B cell (primary cell): ENCODE measurements at regions of chr5 and their contacts with region 1.

Region 1: DNA sequence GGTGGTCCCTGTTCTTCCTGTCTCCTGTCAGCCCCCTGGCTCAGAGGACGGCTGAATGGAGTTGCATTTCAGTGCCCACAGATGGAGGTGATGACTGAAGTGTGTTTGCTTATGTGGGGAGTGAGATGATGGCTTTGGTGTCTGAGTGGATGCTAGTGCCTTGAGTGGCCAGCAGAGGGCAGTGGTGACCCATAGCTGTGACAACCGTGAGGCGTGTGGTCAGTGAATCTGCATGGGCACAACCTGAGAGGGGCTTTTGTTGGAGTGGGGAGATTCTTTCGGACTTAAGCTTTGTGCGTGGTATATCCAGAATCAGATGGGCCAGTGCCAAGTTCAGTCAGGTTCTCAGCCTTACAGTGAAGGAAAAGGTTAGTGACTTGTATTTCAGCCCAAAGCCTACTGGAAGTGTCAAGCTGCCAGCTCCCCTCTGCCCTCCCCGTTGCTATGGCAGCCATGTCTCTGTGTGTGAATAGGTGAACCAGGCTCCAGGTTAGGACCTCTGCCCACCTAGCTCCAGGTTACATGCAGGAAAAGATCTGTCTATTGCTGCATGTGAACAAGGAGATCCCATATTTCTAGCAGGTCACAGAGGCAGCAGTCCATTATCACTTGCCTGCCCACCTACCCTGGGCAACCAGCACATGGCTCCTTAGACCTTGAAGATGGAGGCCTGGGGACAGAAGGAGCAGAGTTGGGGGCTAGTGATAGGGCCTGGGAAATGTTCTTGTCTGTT is 14.7 kb upstream of the CXXC5 start:
- DNase-seq: peak; percentile 87
- ATAC-seq: peak; percentile 14
- H3K4me3 ChIP-seq: no peak overlapping the region
- H3K4me3 Mint-ChIP-seq: peak overlapping the region; percentile 17
- H3K27ac ChIP-seq: peak overlapping the region; percentile 88 to 93
- H3K27ac Mint-ChIP-seq: peak overlapping the region; percentile 61
- H3K4me1 ChIP-seq: peaks cover 44 to 59% of the 10 kb centered on the region in 2 donors
- H3K4me1 Mint-ChIP-seq: peaks cover 54% of the 10 kb centered on the region
- H3K27me3 ChIP-seq: no peaks in the 10 kb centered on the region
- H3K27me3 Mint-ChIP-seq: no peaks in the 10 kb centered on the region
- CTCF ChIP-seq: peak; percentile 96

Region 2: GRCh38 chr5:139403787-139404483 is 229.5 kb before region 1 on chr5 and contains the start of gene SPATA24:
- CTCF ChIA-PET with region 1: no interaction called
- POLR2A ChIA-PET with region 1: interaction called, 3 read pairs
- intact Hi-C with region 1: loop called (anchors 10 kb)
- DNase-seq: peak; percentile 99
- ATAC-seq: peak; percentile 85
- H3K4me3 ChIP-seq: peak within 1 kb of the TSS; percentile 50 to 73 (median 68)
- H3K4me3 Mint-ChIP-seq: peak within 1 kb of the TSS; percentile 95
- H3K27ac ChIP-seq: peak within 1 kb of the TSS; percentile 85 to 86
- H3K27ac Mint-ChIP-seq: peak within 1 kb of the TSS; percentile 97
- H3K4me1 ChIP-seq: peaks cover 33 to 43% of the 10 kb centered on the region in 2 donors
- H3K4me1 Mint-ChIP-seq: peaks cover 43% of the 10 kb centered on the region
- H3K27me3 ChIP-seq: no peaks in the 10 kb centered on the region
- H3K27me3 Mint-ChIP-seq: no peaks in the 10 kb centered on the region
- CTCF ChIP-seq: no peak
- total RNA-seq, gene SPATA24: 6.4 and 8.2 TPM in 2 replicates

Region 3: DNA sequence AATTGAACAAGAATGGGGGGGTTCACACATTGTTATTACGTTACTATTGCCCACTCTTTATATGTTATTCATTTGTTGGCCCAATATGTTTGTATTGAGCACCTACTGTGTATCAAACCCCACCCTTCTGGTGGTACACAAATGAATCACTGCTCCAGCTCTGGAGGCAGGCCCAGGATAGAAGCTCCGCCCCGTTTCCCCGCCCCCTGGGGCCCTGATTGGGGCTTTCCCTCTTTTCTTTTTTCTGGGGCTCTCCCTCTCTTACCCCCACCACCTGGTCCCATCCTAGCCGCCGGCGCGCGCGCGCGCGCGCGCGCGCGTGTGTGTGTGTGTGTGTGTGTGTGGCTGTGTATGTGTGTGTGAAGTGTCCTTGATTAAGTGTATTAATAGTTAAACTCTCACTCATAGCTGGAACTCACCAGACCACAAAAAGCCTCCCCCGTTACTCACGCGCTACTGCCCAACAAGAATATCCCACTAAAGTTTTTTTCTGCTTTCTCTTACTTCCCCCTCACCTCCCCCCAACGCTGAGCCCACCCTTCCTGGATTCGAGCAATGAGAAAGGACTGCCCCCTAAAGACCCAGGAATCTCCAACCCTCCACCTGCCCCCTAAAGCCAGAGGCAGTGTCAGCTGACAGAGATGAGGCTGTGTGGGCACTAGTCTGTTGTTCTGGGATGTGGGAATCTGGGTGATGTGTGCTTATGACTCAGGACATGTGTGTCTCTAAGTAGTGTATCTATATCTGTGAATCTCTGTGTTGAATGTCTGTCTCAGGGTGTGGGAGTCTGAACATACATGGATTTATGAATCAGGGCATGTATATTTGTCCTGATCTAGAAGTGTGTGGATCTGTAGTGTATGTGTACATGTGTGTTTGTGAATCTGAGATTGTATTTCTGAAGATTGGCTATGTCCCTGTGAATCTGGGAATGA is 18.7 kb after region 1 on chr5:
- CTCF ChIA-PET with region 1: interaction called, 338 read pairs
- POLR2A ChIA-PET with region 1: interaction called, 511 read pairs
- intact Hi-C with region 1: loop called (anchors 1 kb)
- DNase-seq: peak; percentile 92
- ATAC-seq: peak; percentile 50
- H3K4me3 ChIP-seq: peak overlapping the region; percentile 50 to 98 (median 95)
- H3K4me3 Mint-ChIP-seq: peak overlapping the region; percentile 88
- H3K27ac ChIP-seq: peak overlapping the region; percentile 71 to 90
- H3K27ac Mint-ChIP-seq: peak overlapping the region; percentile 94
- H3K4me1 ChIP-seq: peaks cover 68 to 74% of the 10 kb centered on the region in 2 donors
- H3K4me1 Mint-ChIP-seq: peaks cover 71% of the 10 kb centered on the region
- H3K27me3 ChIP-seq: no peaks in the 10 kb centered on the region
- H3K27me3 Mint-ChIP-seq: no peaks in the 10 kb centered on the region
- CTCF ChIP-seq: no peak

Region 4: GRCh38 chr5:139696894-139697658 is 63.6 kb after region 1 on chr5:
- CTCF ChIA-PET with region 1: interaction called, 502 read pairs
- POLR2A ChIA-PET with region 1: interaction called, 7 read pairs
- intact Hi-C with region 1: no loop called
- DNase-seq: peak; percentile 55
- ATAC-seq: peak; percentile 34
- H3K4me3 ChIP-seq: peak overlapping the region in 4 of 5 experiments; percentile 33 to 56 (median 45)
- H3K4me3 Mint-ChIP-seq: peak overlapping the region; percentile 82
- H3K27ac ChIP-seq: no peak overlapping the region
- H3K27ac Mint-ChIP-seq: peak overlapping the region; percentile 72
- H3K4me1 ChIP-seq: peaks cover 41 to 48% of the 10 kb centered on the region in 2 donors
- H3K4me1 Mint-ChIP-seq: peaks cover 45% of the 10 kb centered on the region
- H3K27me3 ChIP-seq: peaks cover 0 to 35% (median 10%) of the 10 kb centered on the region in 4 experiments
- H3K27me3 Mint-ChIP-seq: peaks cover 17% of the 10 kb centered on the region
- CTCF ChIP-seq: no peak

Region 5: DNA sequence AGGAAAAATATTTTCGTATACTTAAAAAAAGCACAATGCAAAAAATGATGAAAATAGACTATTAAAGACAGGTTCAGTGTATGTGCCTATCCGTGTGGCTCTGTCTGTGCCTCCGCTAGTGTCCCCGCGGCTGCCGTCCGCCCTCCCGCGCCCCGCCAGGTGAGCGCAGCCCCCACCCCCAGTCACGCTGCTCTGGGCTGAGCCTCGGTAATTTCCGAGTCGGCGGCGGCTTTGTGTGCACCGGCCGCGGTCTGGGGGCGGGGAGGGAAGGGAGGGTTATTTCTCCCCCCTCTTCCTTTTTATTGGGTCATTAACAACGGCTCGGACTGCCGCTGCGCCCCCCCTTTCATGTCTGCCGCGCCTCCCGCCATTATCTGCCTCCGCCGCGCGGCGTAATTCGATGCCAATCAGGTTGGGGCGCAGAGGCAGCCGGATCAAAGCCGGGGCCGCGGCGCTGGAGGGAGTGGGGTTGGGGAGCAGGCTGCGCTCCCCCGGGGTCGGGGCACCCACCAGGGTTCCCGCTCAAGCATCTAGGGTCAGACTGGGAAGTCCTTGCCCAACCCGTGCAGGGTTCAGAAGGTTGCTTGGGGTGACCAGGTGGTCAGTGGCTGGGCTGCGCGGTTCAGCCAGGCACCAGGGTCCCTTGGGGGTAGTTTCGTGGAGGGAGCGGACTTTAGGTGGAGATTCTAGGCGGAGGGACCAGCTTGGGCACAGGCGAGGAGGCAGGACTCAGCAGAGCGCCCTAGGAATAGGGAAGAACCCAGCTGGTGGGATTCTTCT is 122.6 kb after region 1 on chr5:
- CTCF ChIA-PET with region 1: interaction called, 479 read pairs
- POLR2A ChIA-PET with region 1: interaction called, 81 read pairs
- intact Hi-C with region 1: no loop called
- DNase-seq: peak; percentile 76
- ATAC-seq: peak; percentile 71
- H3K4me3 ChIP-seq: peak overlapping the region in 4 of 5 experiments; percentile 25 to 40 (median 39)
- H3K4me3 Mint-ChIP-seq: peak overlapping the region; percentile 83
- H3K27ac ChIP-seq: no peak overlapping the region
- H3K27ac Mint-ChIP-seq: peak overlapping the region; percentile 65
- H3K4me1 ChIP-seq: peaks cover 44 to 47% of the 10 kb centered on the region in 2 donors
- H3K4me1 Mint-ChIP-seq: peaks cover 57% of the 10 kb centered on the region
- H3K27me3 ChIP-seq: peaks cover 0 to 24% (median 8%) of the 10 kb centered on the region in 4 experiments
- H3K27me3 Mint-ChIP-seq: peaks cover 17% of the 10 kb centered on the region
- CTCF ChIP-seq: no peak

Region 6: DNA sequence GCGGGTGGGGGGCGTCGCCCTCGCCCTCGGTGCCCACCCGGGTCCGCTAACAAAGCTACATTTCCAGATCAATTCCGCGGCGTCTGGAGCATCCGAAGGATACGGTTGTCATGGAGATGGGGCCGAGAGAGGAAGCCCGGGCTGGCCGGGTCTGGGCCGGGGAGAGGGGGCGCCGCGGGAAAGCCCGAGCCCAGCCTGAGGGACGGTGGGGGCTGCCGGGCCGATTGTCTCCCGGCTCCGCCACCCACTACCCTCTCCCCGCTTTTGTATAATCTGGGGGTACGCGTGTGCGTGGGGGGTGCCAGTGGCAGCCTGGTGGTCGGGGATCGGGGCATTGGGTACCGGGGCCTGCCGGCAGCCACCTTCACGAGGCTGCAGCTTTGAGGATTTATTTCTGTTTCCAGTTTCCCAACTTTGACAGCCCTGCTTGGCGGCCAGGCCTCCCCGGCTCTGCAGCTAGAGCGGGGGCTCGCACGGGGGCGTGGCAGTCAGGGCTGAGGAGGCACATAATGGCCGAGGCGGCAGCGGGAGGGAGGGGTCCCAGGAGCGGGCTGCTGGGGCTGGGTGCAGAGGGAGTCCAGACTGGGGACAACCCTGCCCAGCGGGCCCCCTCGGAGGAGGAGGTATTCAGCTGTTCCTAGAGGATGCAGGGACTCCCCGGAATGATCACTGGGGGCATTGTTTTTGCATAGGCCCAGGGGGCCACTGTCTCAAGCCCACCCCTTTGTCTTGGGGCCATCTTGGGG is 162.8 kb after region 1 on chr5:
- CTCF ChIA-PET with region 1: no interaction called
- POLR2A ChIA-PET with region 1: no interaction called
- intact Hi-C with region 1: no loop called
- DNase-seq: peak; percentile 41
- ATAC-seq: no peak
- H3K4me3 ChIP-seq: peak overlapping the region in 3 of 5 experiments; percentile 21 to 41 (median 29)
- H3K4me3 Mint-ChIP-seq: peak overlapping the region; percentile 69
- H3K27ac ChIP-seq: no peak overlapping the region
- H3K27ac Mint-ChIP-seq: peak overlapping the region; percentile 15
- H3K4me1 ChIP-seq: peaks cover 12 to 14% of the 10 kb centered on the region in 2 donors
- H3K4me1 Mint-ChIP-seq: peaks cover 11% of the 10 kb centered on the region
- H3K27me3 ChIP-seq: peaks cover 0 to 60% (median 23%) of the 10 kb centered on the region in 4 experiments
- H3K27me3 Mint-ChIP-seq: peaks cover 71% of the 10 kb centered on the region
- CTCF ChIP-seq: no peak

Region 7: DNA sequence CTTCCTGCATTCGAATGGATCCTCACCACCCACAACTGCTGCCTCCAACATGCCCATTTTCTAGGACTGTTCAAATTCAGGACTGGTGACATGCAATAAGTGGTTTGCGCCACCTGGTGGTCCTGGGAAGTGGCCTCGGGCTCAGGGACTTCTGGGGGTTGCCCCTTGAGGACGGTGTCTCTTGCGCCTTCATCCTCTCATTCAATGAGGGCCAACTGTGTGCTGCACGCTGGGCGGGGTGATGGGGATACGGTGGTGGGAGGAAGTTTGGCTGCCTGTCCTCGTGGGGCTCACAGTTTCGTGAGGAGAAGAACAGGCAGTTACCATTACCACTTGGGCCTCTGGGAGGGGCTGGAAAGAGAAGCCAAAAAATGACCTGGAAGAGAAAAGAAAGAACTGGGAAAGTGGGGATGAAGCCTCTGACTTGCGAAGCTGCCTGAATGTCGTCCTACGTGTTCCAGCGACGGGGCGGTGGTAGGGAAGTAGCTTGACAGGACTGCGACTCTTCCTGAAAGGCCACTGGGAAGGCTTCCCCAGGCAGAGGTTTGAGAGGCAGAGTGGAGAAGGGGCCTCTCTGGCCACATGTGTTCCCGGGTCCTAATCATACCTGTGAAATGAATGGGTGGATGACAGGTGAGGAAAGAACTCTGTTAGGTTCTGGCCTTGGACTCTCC is 211.1 kb after region 1 on chr5:
- CTCF ChIA-PET with region 1: interaction called, 5 read pairs
- POLR2A ChIA-PET with region 1: no interaction called
- intact Hi-C with region 1: loop called (anchors 5 kb)
- DNase-seq: peak; percentile 83
- ATAC-seq: peak; percentile 26
- H3K4me3 ChIP-seq: no peak overlapping the region
- H3K4me3 Mint-ChIP-seq: peak overlapping the region; percentile 17
- H3K27ac ChIP-seq: no peak overlapping the region
- H3K27ac Mint-ChIP-seq: peak overlapping the region; percentile 64
- H3K4me1 ChIP-seq: peaks cover 8 to 16% of the 10 kb centered on the region in 2 donors
- H3K4me1 Mint-ChIP-seq: peaks cover 15% of the 10 kb centered on the region
- H3K27me3 ChIP-seq: peaks cover 0 to 36% (median 18%) of the 10 kb centered on the region in 4 experiments
- H3K27me3 Mint-ChIP-seq: peaks cover 30% of the 10 kb centered on the region
- CTCF ChIP-seq: peak; percentile 85